Gastrocnemius medialis (tissue), 4 donors: ENCODE measurements at regions of chr12 and their contacts with region 1.

Region 1: DNA sequence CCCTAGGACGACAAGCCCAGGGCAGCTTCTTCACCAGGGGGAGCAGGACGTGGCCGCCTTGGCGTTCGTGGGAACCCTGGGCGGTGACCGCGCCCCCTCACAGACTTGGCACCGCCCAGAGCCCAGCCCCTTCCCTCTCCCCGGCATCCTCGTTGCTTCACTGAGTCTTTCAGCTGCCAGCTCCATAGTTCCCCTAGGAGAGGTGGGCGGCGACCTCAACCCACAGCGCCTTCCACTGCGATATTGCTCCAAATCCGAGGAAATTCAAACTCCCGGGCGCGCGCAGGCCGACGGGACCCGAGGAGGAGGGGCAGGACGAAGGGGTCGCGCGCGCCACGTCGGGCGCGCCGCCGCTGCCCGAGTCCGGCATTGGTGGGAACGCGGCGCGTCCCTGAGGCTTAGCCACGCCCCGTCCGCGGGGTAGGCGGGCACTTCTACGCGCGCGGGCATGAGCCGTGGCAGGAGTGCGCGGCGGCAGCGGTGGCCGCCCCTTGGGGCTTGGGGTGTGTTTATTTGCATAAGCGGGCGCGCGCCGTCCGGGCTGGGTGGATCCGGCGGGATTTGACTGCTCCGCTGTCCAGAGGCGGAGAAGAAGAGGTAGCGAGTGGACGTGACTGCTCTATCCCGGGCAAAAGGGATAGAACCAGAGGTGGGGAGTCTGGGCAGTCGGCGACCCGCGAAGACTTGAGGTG is at the starts of genes APAF1 and IKBIP:
- DNase-seq: peak; percentile 92 to 95
- ATAC-seq: peak; percentile 83 to 86
- H3K4me3 ChIP-seq: peak within 1 kb of the TSS; percentile 87 to 96 (median 90)
- H3K27ac ChIP-seq: peak within 1 kb of the TSS; percentile 85 to 90 (median 88)
- H3K4me1 ChIP-seq: peaks cover 20 to 24% of the 10 kb centered on the region in 2 donors
- H3K27me3 ChIP-seq: no peaks in the 10 kb centered on the region
- CTCF ChIP-seq: no peak
- POLR2A ChIP-seq: peak; percentile 92 to 95
- total RNA-seq, gene APAF1: 5.8 to 11.5 (median 7.0) TPM
- total RNA-seq, gene IKBIP: 0.78 to 3.7 (median 2.9) TPM

Region 2: DNA sequence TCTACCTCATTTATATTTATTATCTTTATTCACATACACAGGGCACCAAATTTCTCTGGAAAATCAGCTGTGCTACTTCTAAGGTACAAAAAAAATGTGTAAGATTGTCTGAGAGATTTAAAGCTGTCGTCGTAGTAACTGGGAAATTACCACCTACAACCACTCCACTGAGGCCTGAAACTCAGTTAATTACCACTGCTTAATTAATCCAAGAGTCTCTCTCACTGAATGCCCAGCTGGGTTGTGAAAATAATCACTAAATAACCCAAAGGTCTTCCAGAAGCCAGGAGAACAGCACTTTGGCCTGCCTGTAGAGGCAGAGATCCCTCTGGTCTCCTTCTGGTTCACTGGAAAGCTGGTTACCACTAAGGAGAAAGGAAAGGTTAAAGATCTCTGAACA is 336.7 kb before region 1 on chr12:
- in situ Hi-C with region 1: no loop called
- intact Hi-C with region 1: no loop called
- DNase-seq: no peak
- ATAC-seq: no peak
- H3K4me3 ChIP-seq: no peak overlapping the region
- H3K27ac ChIP-seq: no peak overlapping the region
- H3K4me1 ChIP-seq: no peaks in the 10 kb centered on the region
- H3K27me3 ChIP-seq: no peaks in the 10 kb centered on the region
- CTCF ChIP-seq: no peak
- POLR2A ChIP-seq: no peak

Region 3: DNA sequence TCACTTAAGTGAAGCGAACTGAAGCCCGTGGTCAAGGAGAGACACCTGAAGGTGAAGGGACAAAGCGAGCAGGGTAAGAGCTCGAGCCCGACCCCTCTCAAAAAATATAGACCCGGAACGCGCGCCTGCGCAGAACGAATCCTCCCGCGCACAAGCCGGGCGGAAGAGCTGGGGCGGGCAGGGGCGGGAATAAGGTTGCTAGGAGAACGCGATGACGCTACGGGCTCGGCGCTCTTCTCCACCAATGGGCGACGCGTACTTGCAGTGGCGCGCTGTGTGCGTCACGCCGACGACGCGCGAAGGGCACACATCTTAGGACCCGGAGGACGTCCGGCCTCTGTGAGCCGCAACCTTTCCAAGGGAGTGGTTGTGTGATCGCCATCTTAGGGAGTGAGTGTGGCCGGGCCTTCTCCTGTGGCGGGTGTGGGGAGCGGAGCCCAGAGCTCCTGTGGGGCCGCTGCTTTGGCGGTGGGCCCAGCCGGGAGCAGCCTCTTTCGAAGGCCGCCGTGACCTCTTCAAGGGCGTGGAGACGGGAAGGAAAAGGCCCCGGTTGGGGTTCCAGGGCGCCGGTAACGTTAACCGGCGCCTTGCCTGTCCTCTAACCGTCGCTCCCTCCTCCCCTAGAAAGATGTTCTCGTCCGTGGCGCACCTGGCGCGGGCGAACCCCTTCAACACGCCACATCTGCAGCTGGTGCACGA is 51.4 kb before region 1 on chr12 and contains the start of gene SLC25A3:
- in situ Hi-C with region 1: no loop called
- intact Hi-C with region 1: loop called (anchors 1 kb)
- DNase-seq: peak; percentile 95 to 98
- ATAC-seq: peak; percentile 92 to 95
- H3K4me3 ChIP-seq: peak within 1 kb of the TSS; percentile 82 to 96 (median 88)
- H3K27ac ChIP-seq: peak within 1 kb of the TSS; percentile 94 to 100 (median 96)
- H3K4me1 ChIP-seq: peaks cover 24 to 32% of the 10 kb centered on the region in 2 donors
- H3K27me3 ChIP-seq: no peaks in the 10 kb centered on the region
- CTCF ChIP-seq: no peak
- POLR2A ChIP-seq: peak; percentile 98
- total RNA-seq, gene SLC25A3: 870 to 1,994 (median 1,275) TPM

Region 4: DNA sequence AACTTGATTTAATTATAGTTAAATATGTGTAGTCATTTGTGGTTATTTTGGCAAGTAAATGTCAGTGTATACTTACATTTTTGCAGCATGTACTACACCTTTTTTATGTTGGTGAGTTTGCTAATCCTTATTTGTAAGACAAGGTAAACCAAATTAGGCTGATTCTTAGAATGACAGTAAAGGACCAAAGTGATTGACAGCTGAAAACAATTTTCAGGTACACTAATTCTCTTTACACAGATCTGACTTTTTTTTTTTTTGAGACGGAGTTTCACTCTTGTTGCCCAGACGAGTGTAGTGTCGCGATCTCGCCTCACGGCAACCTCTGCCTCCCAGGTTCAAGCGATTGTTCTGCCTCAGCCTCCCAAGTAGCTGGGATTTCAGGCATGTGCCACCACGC is 42.9 kb before region 1 on chr12:
- in situ Hi-C with region 1: loop called in 1 of 4 experiments (anchors 5 kb)
- intact Hi-C with region 1: no loop called
- DNase-seq: no peak
- ATAC-seq: no peak
- H3K4me3 ChIP-seq: no peak overlapping the region
- H3K27ac ChIP-seq: no peak overlapping the region
- H3K4me1 ChIP-seq: peaks cover 4 to 7% of the 10 kb centered on the region in 2 donors
- H3K27me3 ChIP-seq: no peaks in the 10 kb centered on the region
- CTCF ChIP-seq: no peak
- POLR2A ChIP-seq: no peak

Region 5: DNA sequence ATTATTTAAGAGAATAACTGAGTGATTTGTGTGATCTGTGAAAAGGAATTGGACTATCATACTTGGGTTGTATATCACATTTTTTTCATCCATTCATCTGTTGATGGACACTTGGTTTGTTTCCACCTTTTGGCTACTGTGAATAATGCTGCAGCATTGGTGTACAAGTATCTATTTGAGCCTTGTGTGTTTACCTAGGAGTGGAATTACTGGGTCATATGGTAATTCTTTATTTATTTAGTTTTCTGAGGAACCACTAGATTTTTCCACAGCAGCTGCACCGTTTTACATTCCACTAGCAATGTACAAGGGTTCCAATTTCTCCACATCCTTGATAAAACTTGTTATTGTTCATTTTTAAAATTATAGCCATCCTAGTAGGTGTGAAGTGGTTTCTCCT is 56.3 kb after region 1 on chr12:
- in situ Hi-C with region 1: no loop called
- intact Hi-C with region 1: no loop called
- DNase-seq: no peak
- ATAC-seq: no peak
- H3K4me3 ChIP-seq: no peak overlapping the region
- H3K27ac ChIP-seq: no peak overlapping the region
- H3K4me1 ChIP-seq: peaks cover 5 to 6% of the 10 kb centered on the region in 2 donors
- H3K27me3 ChIP-seq: no peaks in the 10 kb centered on the region
- CTCF ChIP-seq: no peak
- POLR2A ChIP-seq: no peak